Dorsolateral prefrontal cortex (tissue), 120 donors: ENCODE measurements at regions of chr9 and their contacts with region 1.

Region 1: DNA sequence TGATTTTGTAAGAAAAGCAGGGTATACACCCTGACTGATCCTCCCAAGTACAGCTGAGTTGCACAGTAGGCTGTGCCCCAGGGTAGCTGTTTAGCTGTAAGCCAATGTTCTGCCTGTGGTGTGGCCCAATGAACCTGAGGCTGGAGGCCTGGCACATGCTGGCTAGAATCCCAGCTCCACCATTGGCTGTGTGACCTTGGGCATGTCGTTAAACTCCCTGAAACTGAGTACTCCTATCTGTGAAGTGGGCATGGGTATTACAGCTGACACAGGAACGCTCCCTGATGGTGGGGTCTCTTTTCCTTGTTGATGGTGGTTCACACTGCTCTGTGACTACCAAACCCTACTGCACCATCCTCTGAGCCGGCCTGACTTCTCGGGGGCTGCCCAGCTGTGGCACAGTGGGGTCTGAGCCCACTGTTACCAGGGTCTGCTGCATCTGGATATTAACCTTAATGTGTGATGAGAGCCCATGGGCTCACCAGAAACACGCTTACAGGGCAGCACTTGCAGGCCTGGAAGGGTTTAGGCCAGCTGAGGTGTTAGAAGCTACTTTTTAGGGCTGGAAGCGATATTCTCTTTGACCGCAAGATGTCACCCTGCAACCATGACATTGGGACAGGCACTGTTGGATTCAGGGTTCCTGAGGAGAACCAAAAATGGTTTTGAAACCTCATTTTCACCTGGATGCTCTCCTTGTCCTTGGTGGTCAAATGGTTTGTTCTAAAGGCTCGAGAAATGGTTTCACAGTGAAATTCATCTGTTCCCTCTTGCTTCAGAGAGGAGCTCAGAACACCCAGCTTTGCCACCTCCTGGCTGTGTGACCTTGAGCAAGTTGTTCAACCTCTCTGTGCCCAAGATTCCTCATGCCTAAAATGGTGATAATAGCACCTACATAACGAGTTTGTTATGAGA is 6.8 kb upstream of the GADD45G start:
- DNase-seq: peak in 5 of 10 donors; percentile 30 to 64 (median 56)
- H3K4me3 ChIP-seq: no peak overlapping the region
- H3K27ac ChIP-seq: no peak overlapping the region
- H3K27me3 ChIP-seq: no peaks in the 10 kb centered on the region
- CTCF ChIP-seq: peak; percentile 45 to 92 (median 80)

Region 2: GRCh38 chr9:89664896-89665329 is 66.9 kb after region 1 on chr9:
- intact Hi-C with region 1: no loop called
- DNase-seq: no peak
- H3K4me3 ChIP-seq: no peak overlapping the region
- H3K27ac ChIP-seq: no peak overlapping the region
- H3K27me3 ChIP-seq: no peaks in the 10 kb centered on the region
- CTCF ChIP-seq: no peak

Region 3: DNA sequence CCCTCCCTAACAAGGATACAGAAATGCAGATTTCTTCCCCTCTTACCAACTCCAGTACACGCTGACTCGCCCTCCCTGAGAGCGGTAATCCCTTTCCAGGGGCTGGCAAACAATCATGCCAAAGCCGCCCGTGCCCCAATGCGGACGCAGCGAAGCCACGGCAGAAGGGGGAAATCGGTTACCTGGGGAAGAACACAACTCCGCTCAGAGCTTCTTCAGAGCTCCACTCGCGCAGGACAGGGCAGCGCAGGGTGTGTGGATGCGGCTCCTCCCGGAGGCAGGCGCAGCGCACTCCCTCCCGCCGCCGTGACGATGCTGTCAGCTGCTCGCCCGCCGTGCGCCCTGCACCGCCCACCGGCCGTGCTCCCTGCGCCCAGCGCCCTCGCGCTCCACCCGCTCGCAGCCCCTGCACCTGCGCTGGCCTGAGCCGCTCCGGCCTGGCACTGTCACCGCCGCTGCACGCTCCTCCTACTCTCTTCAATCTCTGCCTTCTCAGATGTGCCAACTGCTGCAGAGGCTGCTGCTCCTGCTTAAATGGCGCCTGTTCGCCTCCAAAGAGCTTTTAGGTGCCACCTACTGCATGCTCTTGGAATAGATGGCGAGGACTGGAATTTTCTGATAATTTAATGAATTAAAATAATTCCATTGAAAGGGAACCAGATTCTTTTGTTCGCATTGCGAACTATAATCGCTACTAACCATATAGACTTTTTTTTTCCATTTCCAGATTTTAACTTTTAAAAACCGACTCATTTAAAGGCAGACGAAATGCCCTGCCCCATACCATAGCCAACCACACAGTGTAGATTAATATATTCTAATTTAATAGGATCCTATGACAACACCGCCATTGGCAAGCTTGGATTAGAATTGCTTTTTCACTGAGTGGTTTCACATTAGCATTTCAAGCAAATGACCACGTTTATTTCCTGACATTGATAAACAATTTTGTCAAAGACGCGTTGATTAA is 1044.9 kb after region 1 on chr9 and contains the start of gene DIRAS2:
- intact Hi-C with region 1: loop called (anchors 10 kb)
- DNase-seq: peak; percentile 61 to 95 (median 84)
- H3K4me3 ChIP-seq: peak within 1 kb of the TSS; percentile 49 to 85 (median 72)
- H3K27ac ChIP-seq: peak within 1 kb of the TSS; percentile 15 to 95 (median 83)
- H3K27me3 ChIP-seq: no peaks in the 10 kb centered on the region
- CTCF ChIP-seq: peak; percentile 19 to 86 (median 68)
- total RNA-seq, gene DIRAS2: 59.9 to 367 (median 223) TPM

Region 4: DNA sequence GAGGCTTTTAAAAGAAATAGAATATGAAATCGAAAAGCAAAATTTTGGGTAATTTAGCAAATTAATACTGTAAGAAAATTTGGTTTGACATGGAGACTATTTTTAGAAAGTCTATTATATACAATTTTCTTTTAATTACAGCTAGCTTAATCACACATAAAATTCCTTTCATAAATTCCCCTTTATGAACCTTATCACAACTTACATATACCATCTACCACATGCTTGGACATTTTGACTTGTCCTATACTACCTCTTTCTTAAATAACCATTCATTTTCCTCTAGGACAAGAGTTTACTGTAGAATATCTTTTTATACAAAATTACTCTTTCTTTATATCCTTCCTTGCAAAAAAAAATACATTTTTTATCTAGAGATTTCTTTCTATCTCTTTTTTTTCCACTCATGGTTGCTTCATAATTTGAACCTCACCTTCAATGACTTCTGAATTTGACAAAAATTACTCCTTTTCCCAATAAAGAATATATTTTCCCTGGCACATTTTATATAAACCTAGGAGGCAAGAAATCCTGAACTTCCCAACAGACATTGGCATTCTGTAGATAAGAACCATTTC is 1169.6 kb after region 1 on chr9:
- intact Hi-C with region 1: loop called in 1 of 2 experiments (anchors 10 kb)
- DNase-seq: no peak
- H3K4me3 ChIP-seq: no peak overlapping the region
- H3K27ac ChIP-seq: no peak overlapping the region
- H3K27me3 ChIP-seq: peaks cover 0 to 2% (median 0%) of the 10 kb centered on the region in 45 donors
- CTCF ChIP-seq: no peak

Region 5: DNA sequence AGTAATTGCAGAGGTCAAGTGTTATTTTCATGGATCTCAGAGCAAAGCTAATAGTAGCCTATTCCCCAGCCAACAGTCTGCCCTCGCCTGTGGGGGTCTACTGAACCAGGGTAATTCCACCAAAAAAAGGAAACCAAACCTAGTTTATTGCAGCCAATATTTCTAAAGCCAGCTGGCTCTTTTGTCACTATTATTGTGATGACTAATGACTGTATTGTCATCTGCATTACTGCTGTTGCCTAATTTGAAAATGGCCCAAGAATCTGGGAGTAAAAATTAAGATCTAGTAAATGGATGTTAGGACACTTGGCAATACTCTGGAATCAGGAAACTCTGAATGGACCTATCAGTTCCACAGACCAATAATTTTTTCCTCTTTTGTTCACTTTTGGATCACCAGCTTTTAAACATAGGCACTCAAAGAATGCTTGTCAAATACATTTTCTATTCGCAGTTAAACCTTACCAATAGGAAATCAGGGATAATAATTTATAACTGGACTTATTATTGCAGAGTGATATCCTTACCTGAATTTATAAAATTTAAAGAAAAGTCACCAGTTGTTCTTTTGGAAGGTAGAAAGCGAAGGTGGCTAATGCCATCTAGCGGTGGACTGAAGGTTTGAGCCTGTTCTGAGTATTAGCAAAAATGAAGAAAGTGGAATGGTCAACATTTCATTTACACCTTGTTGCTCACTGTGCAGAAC is 1272.8 kb after region 1 on chr9:
- intact Hi-C with region 1: loop called in 1 of 2 experiments (anchors 10 kb)
- DNase-seq: peak in 2 of 10 donors; percentile 32 to 50
- H3K4me3 ChIP-seq: no peak overlapping the region
- H3K27ac ChIP-seq: no peak overlapping the region
- H3K27me3 ChIP-seq: peaks cover 0 to 9% (median 0%) of the 10 kb centered on the region in 45 donors
- CTCF ChIP-seq: peak; percentile 68 to 96 (median 86)